KBM-7 (cell line): ENCODE measurements at regions of chr12 and their contacts with region 1.

Region 1: DNA sequence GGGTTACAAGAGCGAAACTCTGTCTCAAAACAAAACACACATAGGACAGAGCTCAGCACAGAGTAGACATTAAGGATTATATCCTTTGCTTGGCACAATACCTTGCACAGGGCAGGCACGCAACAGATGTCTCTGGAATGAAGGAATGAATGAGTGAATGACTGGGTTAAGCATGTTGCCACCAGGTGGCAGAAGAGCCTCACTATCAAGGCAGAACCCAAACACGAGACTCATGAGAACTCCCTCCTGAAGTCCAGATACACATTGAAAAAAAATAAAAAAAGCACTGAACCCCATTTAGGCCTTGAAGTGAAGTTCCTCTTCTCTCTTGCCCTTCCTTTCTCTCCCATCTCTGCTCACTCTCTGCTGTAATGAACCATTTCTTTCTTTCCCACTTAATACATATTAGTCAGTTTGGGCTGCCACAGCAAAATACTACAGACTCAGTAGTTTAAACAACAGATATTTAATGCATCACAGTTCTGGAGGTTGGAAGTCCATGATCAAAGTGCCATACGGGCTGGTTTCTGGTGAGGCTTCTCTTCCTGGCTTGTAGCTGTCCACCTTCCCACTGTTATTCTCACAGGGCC is 26.6 kb upstream of the LTA4H start:
- DNase-seq: peak; percentile 91

Region 2: GRCh38 chr12:96219698-96220206 is 157.8 kb after region 1 on chr12:
- in situ Hi-C with region 1: loop called (anchors 25 kb)
- DNase-seq: no peak

Region 3: GRCh38 chr12:96323906-96324305 is 261.9 kb after region 1 on chr12:
- in situ Hi-C with region 1: no loop called
- DNase-seq: no peak

Region 4: DNA sequence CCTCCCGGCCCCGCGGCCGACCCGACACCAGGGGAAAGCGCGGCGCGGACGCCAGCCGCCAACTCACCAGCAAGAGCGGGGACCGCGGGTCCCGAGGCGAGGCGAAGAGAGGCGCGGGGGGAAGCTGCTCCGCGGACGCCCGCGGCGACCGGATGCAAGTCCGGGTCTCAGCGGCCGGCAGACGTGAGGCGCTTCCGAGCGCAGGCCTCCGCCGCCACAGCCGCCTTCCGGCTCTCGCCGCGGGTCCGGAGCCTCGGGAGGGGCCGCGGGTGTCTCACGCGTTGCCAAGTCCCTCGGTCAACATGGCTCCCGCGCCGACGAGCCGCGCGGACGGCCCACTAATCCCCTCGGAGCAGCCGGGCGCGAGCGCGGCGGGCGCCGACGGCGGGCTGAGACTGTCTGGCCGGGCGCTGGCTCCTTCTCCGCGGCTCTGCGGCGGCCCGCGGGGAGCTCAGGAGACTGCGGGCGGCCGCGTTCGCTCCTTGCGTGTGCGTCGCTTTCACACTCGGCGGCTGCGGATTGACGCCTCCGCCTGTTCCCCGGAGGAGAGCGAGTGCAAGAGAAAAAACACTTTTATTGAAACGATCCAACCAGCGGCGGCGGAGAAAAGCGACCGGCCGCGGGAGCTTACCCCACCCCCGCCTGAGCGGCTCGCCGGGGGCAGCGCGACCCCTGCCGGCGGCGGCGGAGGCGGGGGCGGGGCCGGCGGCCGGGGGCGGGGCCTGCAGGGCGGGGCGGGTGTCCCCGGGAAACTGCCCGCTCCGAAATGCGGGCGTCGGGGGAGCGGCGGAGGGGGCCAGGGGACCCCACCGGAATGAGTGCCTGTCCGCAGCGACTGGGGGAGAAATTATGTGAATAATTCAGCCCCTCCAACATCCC is 338.2 kb after region 1 on chr12 and contains the start of gene CDK17:
- in situ Hi-C with region 1: loop called (anchors 25 kb)
- DNase-seq: peak; percentile 88